Dorsolateral prefrontal cortex (tissue), 120 donors: ENCODE measurements at regions of chr4 and their contacts with region 1.

Region 1: GRCh38 chr4:103089481-103089880 is 10.2 kb downstream of the BDH2 start:
- DNase-seq: no peak
- H3K4me3 ChIP-seq: no peak overlapping the region
- H3K27ac ChIP-seq: no peak overlapping the region
- H3K27me3 ChIP-seq: no peaks in the 10 kb centered on the region
- CTCF ChIP-seq: no peak

Region 2: DNA sequence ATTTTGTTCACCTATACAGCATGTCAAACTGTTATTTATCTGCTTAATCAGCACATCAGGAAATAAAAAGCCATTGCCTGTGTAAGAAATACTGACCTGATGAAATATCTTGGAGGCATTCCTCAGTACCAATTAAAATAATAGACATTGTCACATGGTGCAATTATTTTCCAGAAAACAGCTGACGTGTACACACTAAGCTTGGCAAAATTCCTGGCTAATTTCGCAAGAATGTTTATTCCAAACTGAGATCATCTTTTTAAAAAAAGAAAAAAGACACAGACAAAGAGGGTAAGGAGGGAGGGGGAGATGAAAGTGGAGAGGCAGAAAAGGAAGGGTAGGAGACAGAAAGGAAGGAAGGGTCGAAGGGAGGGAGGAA is 650.3 kb before region 1 on chr4:
- intact Hi-C with region 1: loop called in 1 of 2 experiments (anchors 10 kb)
- DNase-seq: no peak
- H3K4me3 ChIP-seq: peak overlapping the region in 3 of 59 donors; percentile 5 to 11 (median 7)
- H3K27ac ChIP-seq: peak overlapping the region in 34 of 59 donors; percentile 2 to 78 (median 44)
- H3K27me3 ChIP-seq: no peaks in the 10 kb centered on the region
- CTCF ChIP-seq: no peak

Region 3: DNA sequence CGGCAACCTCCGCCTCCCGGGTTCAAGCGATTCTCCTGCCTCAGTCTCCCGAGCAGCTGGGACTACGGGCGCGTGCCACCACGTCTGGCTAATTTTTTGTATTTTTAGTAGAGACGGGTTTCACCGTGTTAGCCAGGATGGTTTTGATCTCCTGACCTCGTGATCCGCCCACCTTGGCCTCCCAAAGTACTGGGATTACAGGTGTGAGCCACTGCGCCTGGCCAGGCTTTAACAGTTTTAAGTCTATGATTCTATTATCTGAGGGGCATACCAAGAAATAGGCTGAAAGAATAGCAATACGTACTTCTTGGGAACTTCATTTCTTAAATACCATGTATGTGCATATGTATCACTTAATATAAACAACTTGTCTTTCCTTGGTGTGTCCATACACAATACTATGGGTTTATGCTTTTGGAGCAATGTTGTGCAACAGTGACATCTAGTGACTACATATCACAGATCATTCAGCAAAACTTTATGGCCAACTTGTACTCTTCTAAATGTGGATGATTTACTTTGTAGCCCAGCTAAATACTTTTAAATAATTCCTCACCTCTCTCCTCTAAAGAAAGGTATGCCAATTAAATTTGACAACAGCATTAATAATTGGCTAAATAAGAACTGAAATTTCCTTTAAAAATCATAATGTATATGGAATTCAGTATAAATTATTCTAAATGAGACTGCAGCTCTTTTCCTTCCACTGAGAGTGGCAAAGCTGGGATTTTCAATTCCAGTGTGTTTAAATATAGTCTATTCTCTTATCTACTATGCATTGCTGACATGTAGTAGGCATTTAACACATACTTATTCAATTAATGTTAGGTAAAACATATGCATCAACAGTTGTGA is 80.4 kb before region 1 on chr4:
- intact Hi-C with region 1: loop called in 1 of 2 experiments (anchors 5 kb)
- DNase-seq: no peak
- H3K4me3 ChIP-seq: no peak overlapping the region
- H3K27ac ChIP-seq: peak overlapping the region in 1 of 59 donors; percentile 31
- H3K27me3 ChIP-seq: no peaks in the 10 kb centered on the region
- CTCF ChIP-seq: peak; percentile 49 to 93 (median 80)

Region 4: GRCh38 chr4:103046416-103047290 is 42.8 kb before region 1 on chr4:
- intact Hi-C with region 1: loop called in 1 of 2 experiments (anchors 5 kb)
- DNase-seq: no peak
- H3K4me3 ChIP-seq: no peak overlapping the region
- H3K27ac ChIP-seq: no peak overlapping the region
- H3K27me3 ChIP-seq: no peaks in the 10 kb centered on the region
- CTCF ChIP-seq: peak in 54 of 56 donors; percentile 21 to 73 (median 55)